HepG2 (cell line): ENCODE measurements at regions of chr1 and their contacts with region 1.

Region 1: GRCh38 chr1:17125756-17126237 is 6.5 kb upstream of the PADI2 start:
- DNase-seq: peak; percentile 66
- ATAC-seq: peak; percentile 91
- H3K4me3 ChIP-seq: no peak overlapping the region
- H3K27ac ChIP-seq: no peak overlapping the region
- H3K4me1 ChIP-seq: peaks cover 26% of the 10 kb centered on the region
- H3K27me3 ChIP-seq: peaks cover 0 to 4% of the 10 kb centered on the region in 2 experiments; a peak in 1 of 5 replicates
- CTCF ChIP-seq: peak; percentile 93
- EP300 ChIP-seq: no peak
- POLR2A ChIP-seq: no peak
- RAD21 ChIP-seq: peak; percentile 92

Region 2: GRCh38 chr1:17236779-17237560 is 111.2 kb after region 1 on chr1:
- CTCF ChIA-PET with region 1: interaction called, 38 read pairs
- POLR2A ChIA-PET with region 1: no interaction called
- in situ Hi-C with region 1: loop called (anchors 5 kb)
- intact Hi-C with region 1: loop called (anchors 1 kb)
- DNase-seq: peak; percentile 73
- ATAC-seq: peak; percentile 90
- H3K4me3 ChIP-seq: no peak overlapping the region; a peak in 1 of 6 replicates
- H3K27ac ChIP-seq: no peak overlapping the region
- H3K4me1 ChIP-seq: peaks cover 7% of the 10 kb centered on the region; the same call in 1 of the 2 replicates
- H3K27me3 ChIP-seq: peaks cover 1 to 14% of the 10 kb centered on the region in 2 experiments; a peak in 2 of 5 replicates
- CTCF ChIP-seq: peak; percentile 97
- EP300 ChIP-seq: no peak
- POLR2A ChIP-seq: no peak
- RAD21 ChIP-seq: peak; percentile 77

Region 3: DNA sequence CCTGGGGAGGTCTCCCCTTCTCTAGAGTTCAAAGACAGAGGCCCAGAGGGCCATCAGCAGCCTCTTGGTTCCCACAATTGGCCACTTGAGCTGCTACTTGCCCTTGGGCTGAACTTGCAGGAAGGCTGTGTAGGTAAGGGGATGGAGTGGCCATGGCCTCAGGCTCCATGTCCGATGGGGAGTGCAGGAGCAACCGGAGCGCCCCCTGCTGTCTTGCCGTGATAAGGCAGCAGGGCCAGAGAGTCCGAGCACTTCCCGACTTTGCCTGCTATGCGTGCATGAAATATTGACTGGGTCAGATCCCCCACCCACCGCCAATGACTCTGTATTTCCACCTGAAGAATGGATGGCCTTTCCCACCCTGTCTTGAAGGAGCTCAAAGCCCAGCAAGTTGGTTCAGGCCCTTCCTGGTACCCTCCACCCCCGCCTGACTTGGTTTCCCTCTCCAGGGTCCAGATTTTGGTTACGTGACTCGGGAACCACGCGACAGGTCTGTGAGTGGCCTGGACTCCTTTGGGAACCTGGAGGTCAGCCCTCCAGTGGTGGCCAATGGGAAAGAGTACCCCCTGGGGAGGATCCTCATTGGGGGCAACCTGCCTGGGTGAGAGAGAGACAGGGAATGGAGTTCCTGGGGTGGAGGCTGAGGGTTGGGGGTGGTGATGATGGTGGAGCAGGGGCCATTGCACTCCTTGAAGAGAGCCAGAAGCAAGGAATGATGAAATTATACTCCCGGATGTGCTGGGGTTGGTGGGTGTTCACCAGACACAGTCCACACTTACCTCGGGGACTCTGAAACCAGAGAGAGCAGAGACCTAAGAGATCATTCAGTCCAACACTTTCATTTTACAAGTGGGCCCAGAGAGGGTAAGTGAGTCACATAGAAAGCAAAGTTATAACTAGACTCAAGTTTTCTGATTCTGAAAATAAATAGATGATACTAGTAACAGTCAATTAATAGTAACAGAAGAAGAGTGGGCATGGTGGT is 148.7 kb after region 1 on chr1:
- CTCF ChIA-PET with region 1: interaction called, 15 read pairs
- POLR2A ChIA-PET with region 1: no interaction called
- in situ Hi-C with region 1: no loop called
- intact Hi-C with region 1: no loop called
- DNase-seq: peak; percentile 24
- ATAC-seq: peak; percentile 89
- H3K4me3 ChIP-seq: no peak overlapping the region
- H3K27ac ChIP-seq: no peak overlapping the region
- H3K4me1 ChIP-seq: no peaks in the 10 kb centered on the region
- H3K27me3 ChIP-seq: peaks cover 2 to 8% of the 10 kb centered on the region in 2 experiments; a peak in 3 of 5 replicates
- CTCF ChIP-seq: peak; percentile 88
- EP300 ChIP-seq: no peak
- POLR2A ChIP-seq: no peak
- RAD21 ChIP-seq: 0 out of 2 replicates have a peak, but pooled peaks have one; percentile 24

Region 4: GRCh38 chr1:17335821-17336710 is 210.3 kb after region 1 on chr1:
- CTCF ChIA-PET with region 1: interaction called, 15 read pairs
- POLR2A ChIA-PET with region 1: no interaction called
- in situ Hi-C with region 1: loop called (anchors 5 kb)
- intact Hi-C with region 1: loop called (anchors 2 kb)
- DNase-seq: peak; percentile 42
- ATAC-seq: peak; percentile 86
- H3K4me3 ChIP-seq: no peak overlapping the region
- H3K27ac ChIP-seq: no peak overlapping the region
- H3K4me1 ChIP-seq: no peaks in the 10 kb centered on the region
- H3K27me3 ChIP-seq: peaks cover 1 to 12% of the 10 kb centered on the region in 2 experiments
- CTCF ChIP-seq: peak; percentile 69
- EP300 ChIP-seq: no peak
- POLR2A ChIP-seq: no peak
- RAD21 ChIP-seq: no peak